Esophagus muscularis mucosa (tissue), 4 donors: ENCODE measurements at regions of chr5 and their contacts with region 1.

Region 1: DNA sequence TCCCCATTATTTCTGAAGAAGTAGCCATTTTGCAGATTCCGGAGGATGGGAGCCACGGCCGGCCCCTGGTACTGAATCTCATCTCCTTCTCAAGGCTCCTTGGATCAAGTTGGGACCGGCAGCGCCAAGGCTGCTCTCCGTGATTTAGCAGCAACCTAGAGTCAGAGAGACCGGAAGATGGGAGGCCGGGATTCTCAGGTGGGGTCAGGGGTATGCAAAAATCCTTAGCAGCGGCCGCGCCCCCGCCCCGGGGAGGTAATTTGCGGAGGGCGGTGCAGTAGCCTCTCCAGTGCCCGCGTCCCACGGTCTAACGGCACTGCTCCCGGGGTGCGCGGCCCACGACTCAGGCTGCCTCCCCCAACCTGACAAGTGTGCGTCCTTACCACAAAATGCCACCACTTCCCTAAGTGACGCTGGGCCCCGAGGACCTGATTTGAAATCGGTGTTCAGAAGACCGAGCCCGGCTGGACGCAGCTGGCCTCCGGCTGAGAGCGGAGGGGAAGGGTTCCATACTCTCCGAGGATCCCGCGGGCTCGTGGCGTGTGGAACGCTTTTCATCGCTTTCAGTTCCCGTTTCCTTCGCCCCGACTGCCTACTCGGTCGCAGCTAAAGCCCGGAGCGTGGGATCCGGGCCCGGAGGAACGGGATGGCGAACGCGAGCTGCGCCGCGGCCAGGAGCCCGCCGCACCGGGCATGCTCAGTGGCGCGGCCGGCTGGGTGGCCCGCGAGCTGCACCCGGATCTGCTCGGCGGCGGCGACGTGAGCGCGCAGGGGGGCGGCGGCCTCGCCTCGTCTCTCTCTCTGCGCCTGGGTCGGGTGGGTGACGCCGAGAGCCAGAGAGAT is at the start of gene SCAMP1:
- DNase-seq: peak; percentile 97
- H3K4me3 ChIP-seq: peak within 1 kb of the TSS; percentile 82 to 94 (median 88)
- H3K27ac ChIP-seq: peak within 1 kb of the TSS; percentile 87 to 93 (median 90)
- H3K4me1 ChIP-seq: peaks cover 15 to 32% (median 27%) of the 10 kb centered on the region in 4 donors
- H3K27me3 ChIP-seq: no peaks in the 10 kb centered on the region
- CTCF ChIP-seq: peak in 2 of 3 experiments; percentile 41 to 63
- EP300 ChIP-seq: no peak
- POLR2A ChIP-seq: peak; percentile 25
- total RNA-seq, gene SCAMP1: 24.7 to 36.8 (median 30.8) TPM

Region 2: DNA sequence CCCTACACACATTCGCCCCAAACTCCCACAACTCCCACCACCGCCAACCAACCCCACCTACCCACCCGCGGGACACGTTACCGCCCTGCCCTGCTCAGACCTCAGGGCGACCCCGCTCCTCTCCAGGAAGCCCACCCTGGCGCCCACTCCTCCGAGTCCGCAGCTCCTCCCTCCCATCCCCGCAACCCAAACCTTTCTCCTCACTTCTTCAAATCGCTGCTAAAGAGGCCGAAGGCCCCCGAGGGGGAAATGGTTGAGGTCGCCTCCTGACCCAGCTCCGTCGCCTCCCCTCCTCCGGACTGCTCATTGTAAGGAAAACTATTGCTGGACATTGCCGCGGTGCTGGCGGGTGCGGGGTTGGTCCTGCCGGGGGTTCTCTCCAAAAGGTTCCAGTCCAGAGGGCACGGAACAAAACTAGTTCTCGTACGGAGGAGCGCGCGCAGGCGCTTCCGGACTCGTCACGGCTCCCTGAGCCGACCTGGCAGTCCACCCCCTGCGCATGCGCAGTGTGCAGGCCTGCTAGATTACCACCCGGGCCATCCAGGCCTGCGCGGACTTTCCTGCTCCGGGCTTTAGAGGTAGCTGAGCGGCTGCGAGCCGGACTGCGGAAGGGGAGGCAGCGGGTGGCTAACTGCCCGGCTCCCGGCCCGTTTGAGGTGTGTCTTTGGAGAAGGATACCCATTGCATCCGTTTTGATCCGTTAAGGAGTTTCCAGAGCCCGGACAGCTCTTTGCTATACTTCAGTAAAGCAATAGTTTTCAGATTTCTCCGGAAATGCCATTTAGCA is 65.6 kb before region 1 on chr5 and contains the start of gene AP3B1:
- intact Hi-C with region 1: loop called (anchors 1 kb)
- DNase-seq: peak; percentile 99
- H3K4me3 ChIP-seq: peak within 1 kb of the TSS; percentile 79 to 95 (median 90)
- H3K27ac ChIP-seq: peak within 1 kb of the TSS; percentile 86 to 92 (median 90)
- H3K4me1 ChIP-seq: peaks cover 16 to 41% (median 31%) of the 10 kb centered on the region in 4 donors
- H3K27me3 ChIP-seq: no peaks in the 10 kb centered on the region
- CTCF ChIP-seq: no peak
- EP300 ChIP-seq: no peak
- POLR2A ChIP-seq: peak; percentile 86
- total RNA-seq, gene AP3B1: 31.2 to 42.1 (median 36.2) TPM

Region 3: DNA sequence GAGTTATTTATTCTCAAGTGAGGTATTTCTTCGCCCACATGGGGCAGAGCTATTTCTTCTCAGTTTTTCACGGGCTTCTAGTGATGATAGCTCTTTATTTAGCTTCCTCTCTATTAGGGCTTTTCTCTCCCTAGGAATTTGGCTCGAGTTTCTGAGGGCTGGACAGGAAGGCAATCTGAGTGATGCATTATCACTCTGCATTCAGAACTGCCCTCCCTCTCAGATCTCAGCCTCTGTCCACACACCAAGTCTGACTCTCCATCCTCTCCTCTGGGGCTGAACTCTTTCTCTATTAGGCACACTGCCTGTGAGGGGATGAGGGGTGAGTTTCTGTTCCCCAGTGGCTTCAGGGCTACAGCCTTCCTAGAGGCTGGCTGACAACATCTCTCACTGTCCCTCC is 14.6 kb before region 1 on chr5:
- intact Hi-C with region 1: no loop called
- DNase-seq: no peak
- H3K4me3 ChIP-seq: no peak overlapping the region
- H3K27ac ChIP-seq: no peak overlapping the region
- H3K4me1 ChIP-seq: peaks cover 0 to 7% (median 4%) of the 10 kb centered on the region in 4 donors
- H3K27me3 ChIP-seq: no peaks in the 10 kb centered on the region
- CTCF ChIP-seq: no peak
- EP300 ChIP-seq: no peak
- POLR2A ChIP-seq: no peak